Common myeloid progenitor, CD34-positive (primary cell): ENCODE measurements at regions of chr3 and their contacts with region 1.

Region 1: GRCh38 chr3:4722103-4722502 is 229.0 kb downstream of the ITPR1 start:
- DNase-seq: peak; percentile 56 to 71 (median 65)
- H3K4me3 ChIP-seq: no peak overlapping the region
- H3K27ac ChIP-seq: no peak overlapping the region
- H3K4me1 ChIP-seq: peaks cover 0 to 29% (median 12%) of the 10 kb centered on the region in 4 experiments
- H3K27me3 ChIP-seq: no peaks in the 10 kb centered on the region

Region 2: DNA sequence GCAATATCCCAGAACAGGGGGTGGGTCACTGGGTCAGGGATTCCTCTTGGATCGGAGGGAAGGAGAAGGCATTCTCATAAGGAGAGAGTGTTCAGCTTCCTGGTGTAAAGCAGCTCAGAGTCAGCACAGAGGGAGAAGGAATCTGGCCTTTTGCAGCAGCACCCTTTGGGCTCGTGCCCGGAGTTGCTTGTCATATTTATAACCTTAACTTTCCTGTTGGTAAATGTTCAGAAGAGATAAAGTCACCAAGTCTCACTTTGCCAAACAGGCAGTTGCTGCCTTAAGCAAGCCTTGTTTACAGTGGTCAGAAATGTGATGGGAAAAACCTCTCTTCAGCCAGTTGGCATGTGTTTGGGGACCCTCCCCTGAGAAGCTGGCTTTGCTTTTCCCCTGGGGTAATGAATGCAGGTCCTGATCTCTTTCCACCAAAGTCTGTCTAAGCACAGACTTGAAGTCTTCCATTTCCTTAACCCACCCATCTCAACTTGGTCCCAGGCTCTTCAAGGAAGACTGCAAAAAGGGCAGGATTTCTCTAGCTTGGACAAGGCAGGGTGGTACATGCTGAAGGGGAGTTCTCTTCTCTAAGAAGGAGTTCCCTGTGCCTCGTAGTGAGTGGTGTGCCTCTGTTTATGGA is 50.2 kb after region 1 on chr3:
- CTCF ChIA-PET with region 1: interaction called, 13 read pairs
- POLR2A ChIA-PET with region 1: interaction called, 3 read pairs
- DNase-seq: peak; percentile 69 to 83 (median 70)
- H3K4me3 ChIP-seq: peak overlapping the region in 2 of 7 experiments; percentile 7 to 29
- H3K27ac ChIP-seq: peak overlapping the region; percentile 67 to 89
- H3K4me1 ChIP-seq: peaks cover 7 to 70% (median 39%) of the 10 kb centered on the region in 4 experiments
- H3K27me3 ChIP-seq: no peaks in the 10 kb centered on the region

Region 3: DNA sequence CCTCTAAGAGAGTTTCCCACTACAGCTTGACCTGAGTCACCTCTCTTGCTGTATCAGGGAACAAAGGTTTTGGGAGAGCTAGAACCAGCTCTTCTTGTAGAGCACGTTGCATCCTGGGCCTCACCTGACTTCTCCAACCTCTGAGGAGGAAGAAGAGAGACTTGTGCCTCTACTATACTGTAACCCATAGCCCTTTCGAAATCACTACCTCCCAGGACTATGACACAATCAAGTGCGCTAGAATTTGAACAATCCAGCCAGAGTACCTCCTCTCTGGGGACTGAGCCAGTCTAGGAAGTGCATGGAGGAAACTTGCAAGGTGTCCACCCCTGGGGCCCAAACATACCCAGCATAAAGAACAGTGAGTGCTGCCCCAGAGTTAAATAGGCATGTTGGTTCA is 64.3 kb after region 1 on chr3:
- CTCF ChIA-PET with region 1: interaction called, 10 read pairs
- POLR2A ChIA-PET with region 1: no interaction called
- DNase-seq: no peak
- H3K4me3 ChIP-seq: no peak overlapping the region
- H3K27ac ChIP-seq: no peak overlapping the region
- H3K4me1 ChIP-seq: no peaks in the 10 kb centered on the region
- H3K27me3 ChIP-seq: no peaks in the 10 kb centered on the region

Region 4: GRCh38 chr3:4986782-4987537 is 264.9 kb after region 1 on chr3:
- CTCF ChIA-PET with region 1: interaction called, 20 read pairs
- POLR2A ChIA-PET with region 1: no interaction called
- DNase-seq: peak; percentile 56 to 71 (median 58)
- H3K4me3 ChIP-seq: peak overlapping the region; percentile 38 to 80 (median 63)
- H3K27ac ChIP-seq: peak overlapping the region in 1 of 2 experiments; percentile 88
- H3K4me1 ChIP-seq: peaks cover 13 to 71% (median 52%) of the 10 kb centered on the region in 4 experiments
- H3K27me3 ChIP-seq: no peaks in the 10 kb centered on the region

Region 5: DNA sequence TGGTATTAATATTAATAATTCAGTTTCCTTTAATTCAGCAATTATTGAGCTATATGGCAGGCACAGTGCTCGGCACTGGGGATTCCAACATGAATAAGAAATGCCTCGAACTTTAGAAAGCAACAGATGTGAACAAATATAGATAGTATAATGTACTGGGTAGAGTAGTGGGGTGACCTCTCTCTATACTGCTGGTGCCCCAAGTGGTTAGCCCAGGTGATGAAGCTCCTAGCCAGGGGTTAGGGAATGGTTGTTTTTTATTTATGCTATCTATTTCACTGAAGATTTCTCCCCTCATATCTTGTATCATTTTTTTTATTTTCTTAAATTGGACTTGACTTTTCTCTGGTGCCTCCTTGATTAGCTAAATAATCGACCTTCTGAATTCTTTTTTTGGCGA is 319.2 kb after region 1 on chr3:
- CTCF ChIA-PET with region 1: interaction called, 27 read pairs
- POLR2A ChIA-PET with region 1: no interaction called
- DNase-seq: no peak
- H3K4me3 ChIP-seq: no peak overlapping the region
- H3K27ac ChIP-seq: no peak overlapping the region
- H3K4me1 ChIP-seq: peaks cover 3 to 23% (median 15%) of the 10 kb centered on the region in 4 experiments
- H3K27me3 ChIP-seq: no peaks in the 10 kb centered on the region

Region 6: GRCh38 chr3:5520237-5520636 is 798.1 kb after region 1 on chr3:
- CTCF ChIA-PET with region 1: no interaction called
- POLR2A ChIA-PET with region 1: no interaction called
- DNase-seq: no peak
- H3K4me3 ChIP-seq: no peak overlapping the region
- H3K27ac ChIP-seq: no peak overlapping the region
- H3K4me1 ChIP-seq: no peaks in the 10 kb centered on the region
- H3K27me3 ChIP-seq: no peaks in the 10 kb centered on the region